ENCODE measurements at regions of chr11 and their contacts with region 1.

Region 1: GRCh38 chr11:10857709-10858438 is at the start of gene ZBED5:
- DNase-seq: peak; percentile 87 to 99 (median 92)
- ATAC-seq: peak; percentile 96
- H3K4me3 ChIP-seq: peak within 1 kb of the TSS; percentile 66
- H3K27ac ChIP-seq: peak within 1 kb of the TSS; percentile 89
- H3K4me1 ChIP-seq: peaks cover 0 to 11% of the 10 kb centered on the region in 2 experiments; a peak in 3 of 5 replicates
- H3K27me3 ChIP-seq: no peaks in the 10 kb centered on the region
- CTCF ChIP-seq: no peak; a peak in 1 of 6 replicates
- EP300 ChIP-seq: peak; percentile 6; the same call in 1 of the 2 replicates
- POLR2A ChIP-seq: peak; percentile 86
- RAD21 ChIP-seq: peak in 1 of 2 experiments; percentile 20; a peak in 2 of 4 replicates
- polyA plus RNA-seq, gene ZBED5: 21.3 to 25.1 TPM

Region 2: GRCh38 chr11:10725114-10725906 is 132.6 kb before region 1 on chr11:
- CTCF ChIA-PET with region 1: no interaction called
- POLR2A ChIA-PET with region 1: no interaction called
- in situ Hi-C with region 1: no loop called
- intact Hi-C with region 1: no loop called
- DNase-seq: peak in 1 of 4 experiments; percentile 47
- ATAC-seq: peak; percentile 26; the same call in 2 of the 3 replicates
- H3K4me3 ChIP-seq: no peak overlapping the region
- H3K27ac ChIP-seq: no peak overlapping the region
- H3K4me1 ChIP-seq: peaks cover 0 to 6% of the 10 kb centered on the region in 2 experiments; a peak in 4 of 5 replicates
- H3K27me3 ChIP-seq: no peaks in the 10 kb centered on the region; a peak in 1 of 5 replicates
- CTCF ChIP-seq: no peak
- EP300 ChIP-seq: no peak
- POLR2A ChIP-seq: no peak
- RAD21 ChIP-seq: no peak

Region 3: GRCh38 chr11:10838083-10838482 is 19.8 kb before region 1 on chr11:
- CTCF ChIA-PET with region 1: no interaction called
- POLR2A ChIA-PET with region 1: interaction called, 15 read pairs
- in situ Hi-C with region 1: no loop called
- intact Hi-C with region 1: no loop called
- DNase-seq: no peak
- ATAC-seq: peak; percentile 42
- H3K4me3 ChIP-seq: no peak overlapping the region
- H3K27ac ChIP-seq: no peak overlapping the region
- H3K4me1 ChIP-seq: peaks cover 3 to 8% of the 10 kb centered on the region in 2 experiments; a peak in 4 of 5 replicates
- H3K27me3 ChIP-seq: no peaks in the 10 kb centered on the region
- CTCF ChIP-seq: no peak
- EP300 ChIP-seq: no peak
- POLR2A ChIP-seq: no peak
- RAD21 ChIP-seq: no peak

Region 4: GRCh38 chr11:10899121-10899830 is 41.4 kb after region 1 on chr11:
- CTCF ChIA-PET with region 1: no interaction called
- POLR2A ChIA-PET with region 1: interaction called, 11 read pairs
- in situ Hi-C with region 1: no loop called
- intact Hi-C with region 1: loop called (anchors 1 kb)
- DNase-seq: peak; percentile 72 to 94 (median 80)
- ATAC-seq: peak; percentile 86
- H3K4me3 ChIP-seq: peak overlapping the region; percentile 1; the same call in 1 of the 2 replicates
- H3K27ac ChIP-seq: peak overlapping the region; percentile 98
- H3K4me1 ChIP-seq: peaks cover 46 to 67% of the 10 kb centered on the region in 2 experiments
- H3K27me3 ChIP-seq: no peaks in the 10 kb centered on the region
- CTCF ChIP-seq: no peak
- EP300 ChIP-seq: peak; percentile 85
- POLR2A ChIP-seq: peak; percentile 57
- RAD21 ChIP-seq: no peak

Region 5: DNA sequence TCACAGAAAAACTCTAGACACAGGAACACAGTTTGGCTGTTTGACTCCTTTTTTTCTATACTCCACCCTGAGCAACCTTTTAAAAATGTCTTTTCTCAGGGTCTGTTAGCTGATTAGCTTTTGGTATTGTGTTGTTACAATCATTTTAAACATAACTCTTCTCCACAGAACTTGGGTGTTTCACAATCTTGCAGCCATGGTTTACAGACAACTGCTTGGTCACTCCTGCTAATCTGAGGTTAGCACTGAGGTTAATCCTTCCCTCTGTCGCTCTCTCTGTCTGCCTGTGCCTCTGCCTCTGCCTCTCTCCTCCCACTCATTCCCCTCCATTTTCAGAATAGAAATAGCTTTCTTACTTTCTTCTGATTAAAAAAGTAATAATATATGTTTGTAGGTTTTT is 62.3 kb after region 1 on chr11:
- CTCF ChIA-PET with region 1: no interaction called
- POLR2A ChIA-PET with region 1: interaction called, 3 read pairs
- in situ Hi-C with region 1: no loop called
- intact Hi-C with region 1: loop called (anchors 5 kb)
- DNase-seq: peak; percentile 52 to 91 (median 72)
- ATAC-seq: peak; percentile 99
- H3K4me3 ChIP-seq: no peak overlapping the region
- H3K27ac ChIP-seq: peak overlapping the region; percentile 93
- H3K4me1 ChIP-seq: peaks cover 0 to 20% of the 10 kb centered on the region in 2 experiments; a peak in 3 of 5 replicates
- H3K27me3 ChIP-seq: no peaks in the 10 kb centered on the region
- CTCF ChIP-seq: no peak
- EP300 ChIP-seq: peak; percentile 82; the same call in 1 of the 2 replicates
- POLR2A ChIP-seq: no peak; the same call in 1 of the 2 replicates
- RAD21 ChIP-seq: peak in 1 of 2 experiments; percentile 8; a peak in 1 of 4 replicates

Region 6: GRCh38 chr11:10933455-10934292 is 75.8 kb after region 1 on chr11:
- CTCF ChIA-PET with region 1: no interaction called
- POLR2A ChIA-PET with region 1: interaction called, 5 read pairs
- in situ Hi-C with region 1: no loop called
- intact Hi-C with region 1: loop called (anchors 2 kb)
- DNase-seq: peak; percentile 81 to 93 (median 84)
- ATAC-seq: peak; percentile 97
- H3K4me3 ChIP-seq: peak overlapping the region; percentile 36
- H3K27ac ChIP-seq: peak overlapping the region; percentile 41; the same call in 2 of the 3 replicates
- H3K4me1 ChIP-seq: peaks cover 9 to 26% of the 10 kb centered on the region in 2 experiments; a peak in 4 of 5 replicates
- H3K27me3 ChIP-seq: no peaks in the 10 kb centered on the region
- CTCF ChIP-seq: peak; percentile 97 to 98 (median 98)
- EP300 ChIP-seq: no peak; the same call in 1 of the 2 replicates
- POLR2A ChIP-seq: 0 out of 2 replicates have a peak, but pooled peaks have one; percentile 45
- RAD21 ChIP-seq: peak; percentile 95 to 96